ENCODE measurements at regions of chr19 and their contacts with region 1.

Region 1: GRCh38 chr19:58196901-58197616 is 14.2 kb downstream of the ZNF274 start:
- H3K4me3 ChIP-seq: no peak overlapping the region
- H3K27ac ChIP-seq: no peak overlapping the region
- H3K4me1 ChIP-seq: no peaks in the 10 kb centered on the region
- CTCF ChIP-seq: no peak

Region 2: DNA sequence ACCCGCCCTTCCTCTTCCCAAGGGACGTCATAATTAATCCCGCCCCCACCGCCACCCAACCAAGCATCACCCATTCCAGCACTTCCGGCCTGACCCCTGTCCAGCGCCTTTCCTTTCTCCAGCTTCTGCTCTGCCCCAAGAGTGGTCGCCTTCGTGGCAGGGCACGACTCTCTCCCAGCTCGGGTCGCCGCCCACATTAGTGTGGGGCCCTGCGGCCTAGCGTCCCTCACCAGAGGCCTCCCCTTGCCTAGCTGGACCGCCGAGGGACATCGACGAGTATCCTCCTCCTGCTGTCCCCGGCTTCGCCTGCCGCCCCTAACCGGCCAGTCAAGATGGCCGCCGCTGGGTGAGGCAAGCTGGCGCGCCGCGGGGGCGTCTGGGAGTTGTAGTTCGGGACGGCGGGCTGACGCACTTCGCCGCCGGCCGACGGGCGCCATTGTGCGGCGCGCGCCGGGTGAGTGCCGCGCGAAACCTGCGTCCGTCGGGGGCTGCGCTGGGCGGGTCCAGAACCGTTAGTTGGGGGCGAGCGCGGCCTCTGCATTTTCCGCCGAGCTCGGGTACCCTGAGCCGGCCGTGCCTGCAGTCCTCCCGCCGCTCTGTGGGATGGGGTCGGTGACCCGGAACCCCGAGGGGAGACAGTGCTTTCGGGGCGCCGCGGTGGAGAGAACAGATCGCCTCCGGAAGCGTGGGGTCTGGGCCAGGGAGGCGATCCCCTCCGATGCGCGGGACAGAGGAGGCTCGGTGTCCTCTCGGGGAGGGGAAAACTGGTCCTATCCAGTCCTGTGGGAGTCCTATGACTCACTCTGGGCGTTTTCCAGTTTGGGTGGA is 13.9 kb before region 1 on chr19 and contains the start of gene ZNF274:
- CTCF ChIA-PET with region 1: interaction called, 4 read pairs
- POLR2A ChIA-PET with region 1: interaction called, 10 read pairs
- H3K4me3 ChIP-seq: peak within 1 kb of the TSS; percentile 95
- H3K27ac ChIP-seq: peak within 1 kb of the TSS; percentile 85
- H3K4me1 ChIP-seq: no peaks in the 10 kb centered on the region
- CTCF ChIP-seq: 0 out of 2 replicates have a peak, but pooled peaks have one; percentile 24

Measured in HEK293 (cell line).